Activated CD8-positive, alpha-beta T cell treated with anti-CD3 and anti-CD28 coated beads, Interleukin-2, amount 10 ng/mL, durations not matched to agents 7 days and 5 days (primary cell): ENCODE measurements at regions of chr22 and their contacts with region 1.

Region 1: GRCh38 chr22:40679964-40680818 is 907 bp downstream of the MCHR1 start:
- DNase-seq: no peak
- ATAC-seq: no peak
- H3K4me3 Mint-ChIP-seq: no peak overlapping the region
- H3K27ac Mint-ChIP-seq: no peak overlapping the region
- H3K4me1 Mint-ChIP-seq: peaks cover 29% of the 10 kb centered on the region
- H3K27me3 Mint-ChIP-seq: peaks cover 21% of the 10 kb centered on the region

Region 2: GRCh38 chr22:40645579-40646197 is 34.5 kb before region 1 on chr22:
- CTCF ChIA-PET with region 1: interaction called, 14 read pairs
- POLR2A ChIA-PET with region 1: no interaction called
- DNase-seq: no peak
- ATAC-seq: no peak
- H3K4me3 Mint-ChIP-seq: no peak overlapping the region
- H3K27ac Mint-ChIP-seq: no peak overlapping the region
- H3K4me1 Mint-ChIP-seq: peaks cover 12% of the 10 kb centered on the region
- H3K27me3 Mint-ChIP-seq: peaks cover 2% of the 10 kb centered on the region

Region 3: DNA sequence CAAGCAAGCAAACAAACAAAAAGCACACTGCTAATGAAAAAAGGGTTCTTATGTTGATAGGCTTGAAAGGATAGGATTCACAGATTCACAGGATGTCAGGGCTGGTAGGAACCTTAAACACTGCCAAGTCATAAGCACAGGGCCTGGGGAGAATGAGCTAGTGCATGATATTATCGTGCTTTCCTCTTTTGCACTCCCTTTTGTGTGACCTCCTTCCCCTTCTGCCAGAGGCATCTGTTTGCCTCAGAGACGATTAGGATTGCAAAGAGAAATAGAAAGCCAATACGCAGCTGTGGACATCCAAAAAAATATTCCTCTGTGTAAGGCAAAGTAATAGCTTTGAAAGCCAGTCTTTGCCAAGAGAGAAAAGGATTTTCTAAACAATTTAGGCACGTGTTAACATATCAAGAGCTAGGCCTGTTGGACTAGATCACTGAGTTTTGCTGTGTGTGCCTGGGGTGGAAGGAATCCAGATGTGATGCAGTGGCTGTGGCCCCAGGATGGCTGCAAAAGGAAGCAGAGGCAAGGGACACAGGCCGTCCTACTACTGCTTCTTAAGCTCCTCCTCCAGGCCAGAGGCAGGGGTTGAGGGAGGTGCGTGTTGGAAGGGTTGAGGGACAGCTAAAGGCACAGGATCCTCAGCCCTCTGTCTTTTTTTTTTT is 29.7 kb after region 1 on chr22:
- CTCF ChIA-PET with region 1: interaction called, 37 read pairs
- POLR2A ChIA-PET with region 1: interaction called, 8 read pairs
- DNase-seq: no peak
- ATAC-seq: no peak
- H3K4me3 Mint-ChIP-seq: no peak overlapping the region
- H3K27ac Mint-ChIP-seq: no peak overlapping the region
- H3K4me1 Mint-ChIP-seq: peaks cover 16% of the 10 kb centered on the region
- H3K27me3 Mint-ChIP-seq: peaks cover 10% of the 10 kb centered on the region

Region 4: GRCh38 chr22:40747361-40747760 is 67.2 kb after region 1 on chr22:
- CTCF ChIA-PET with region 1: interaction called, 10 read pairs
- POLR2A ChIA-PET with region 1: interaction called, 3 read pairs
- DNase-seq: no peak
- ATAC-seq: no peak
- H3K4me3 Mint-ChIP-seq: no peak overlapping the region
- H3K27ac Mint-ChIP-seq: no peak overlapping the region
- H3K4me1 Mint-ChIP-seq: no peaks in the 10 kb centered on the region
- H3K27me3 Mint-ChIP-seq: peaks cover 4% of the 10 kb centered on the region

Region 5: GRCh38 chr22:40782518-40782917 is 102.3 kb after region 1 on chr22:
- CTCF ChIA-PET with region 1: interaction called, 11 read pairs
- POLR2A ChIA-PET with region 1: no interaction called
- DNase-seq: no peak
- ATAC-seq: no peak
- H3K4me3 Mint-ChIP-seq: no peak overlapping the region
- H3K27ac Mint-ChIP-seq: no peak overlapping the region
- H3K4me1 Mint-ChIP-seq: no peaks in the 10 kb centered on the region
- H3K27me3 Mint-ChIP-seq: no peaks in the 10 kb centered on the region

Region 6: DNA sequence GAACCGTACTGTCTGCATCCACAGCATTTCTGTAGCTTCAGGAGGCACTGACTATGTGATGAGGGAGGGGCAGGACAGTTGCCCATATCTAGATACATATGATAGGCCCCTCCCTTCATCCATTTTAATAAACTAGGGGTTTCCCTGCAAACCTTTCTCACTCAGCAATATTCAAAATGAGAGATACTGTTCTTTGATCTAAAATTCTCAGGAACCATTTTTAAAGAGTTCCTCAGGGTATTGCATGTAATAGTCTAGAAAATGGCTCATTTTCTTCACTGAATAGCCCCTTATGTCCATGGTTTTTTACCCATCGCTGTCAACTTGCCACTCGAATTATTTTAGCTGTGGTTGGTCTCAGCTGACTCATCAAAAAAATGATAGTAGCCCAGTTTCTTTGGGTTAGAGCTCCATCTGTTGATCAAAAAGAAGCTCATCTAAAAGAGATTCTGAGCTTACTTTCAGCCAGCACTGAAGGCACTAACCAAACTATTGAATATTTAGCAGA is 218.7 kb after region 1 on chr22:
- CTCF ChIA-PET with region 1: interaction called, 57 read pairs
- POLR2A ChIA-PET with region 1: interaction called, 4 read pairs
- DNase-seq: peak; percentile 24
- ATAC-seq: peak; percentile 33
- H3K4me3 Mint-ChIP-seq: no peak overlapping the region
- H3K27ac Mint-ChIP-seq: no peak overlapping the region
- H3K4me1 Mint-ChIP-seq: peaks cover 8% of the 10 kb centered on the region
- H3K27me3 Mint-ChIP-seq: no peaks in the 10 kb centered on the region